Activated CD4-positive, alpha-beta T cell treated with anti-CD3 and anti-CD28 coated beads, Interleukin-2, amount 10 ng/mL, durations not matched to agents 7 days and 5 days (primary cell): ENCODE measurements at regions of chr12 and their contacts with region 1.

Region 1: DNA sequence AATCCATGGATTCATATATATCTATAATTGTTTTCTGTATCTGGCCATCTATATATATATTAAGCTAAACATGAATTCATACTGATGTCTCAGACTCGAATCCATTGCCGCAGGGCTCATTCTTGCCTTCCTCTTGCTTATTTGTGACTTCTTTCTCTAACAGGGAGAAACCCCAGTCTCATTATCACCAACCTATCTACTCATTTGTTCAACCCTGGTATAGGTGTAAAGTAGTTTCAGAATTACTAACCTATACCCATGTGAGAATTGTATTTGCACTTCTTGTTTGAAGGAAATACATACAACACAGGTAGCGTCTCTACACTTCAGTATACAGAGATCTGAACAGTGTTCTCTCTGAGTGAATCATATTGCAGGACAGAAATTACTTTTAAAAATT is 77.7 kb downstream of the PTPN11 start:
- DNase-seq: no peak
- H3K4me3 Mint-ChIP-seq: no peak overlapping the region
- H3K27ac Mint-ChIP-seq: no peak overlapping the region
- H3K4me1 Mint-ChIP-seq: peaks cover 17% of the 10 kb centered on the region
- H3K27me3 Mint-ChIP-seq: no peaks in the 10 kb centered on the region

Region 2: GRCh38 chr12:111812881-111813741 is 683.4 kb before region 1 on chr12:
- CTCF ChIA-PET with region 1: no interaction called
- POLR2A ChIA-PET with region 1: interaction called, 15 read pairs
- DNase-seq: peak; percentile 73
- H3K4me3 Mint-ChIP-seq: no peak overlapping the region
- H3K27ac Mint-ChIP-seq: no peak overlapping the region
- H3K4me1 Mint-ChIP-seq: peaks cover 9% of the 10 kb centered on the region
- H3K27me3 Mint-ChIP-seq: peaks cover 11% of the 10 kb centered on the region